ENCODE measurements at regions of chr6 and their contacts with region 1.

Region 1: DNA sequence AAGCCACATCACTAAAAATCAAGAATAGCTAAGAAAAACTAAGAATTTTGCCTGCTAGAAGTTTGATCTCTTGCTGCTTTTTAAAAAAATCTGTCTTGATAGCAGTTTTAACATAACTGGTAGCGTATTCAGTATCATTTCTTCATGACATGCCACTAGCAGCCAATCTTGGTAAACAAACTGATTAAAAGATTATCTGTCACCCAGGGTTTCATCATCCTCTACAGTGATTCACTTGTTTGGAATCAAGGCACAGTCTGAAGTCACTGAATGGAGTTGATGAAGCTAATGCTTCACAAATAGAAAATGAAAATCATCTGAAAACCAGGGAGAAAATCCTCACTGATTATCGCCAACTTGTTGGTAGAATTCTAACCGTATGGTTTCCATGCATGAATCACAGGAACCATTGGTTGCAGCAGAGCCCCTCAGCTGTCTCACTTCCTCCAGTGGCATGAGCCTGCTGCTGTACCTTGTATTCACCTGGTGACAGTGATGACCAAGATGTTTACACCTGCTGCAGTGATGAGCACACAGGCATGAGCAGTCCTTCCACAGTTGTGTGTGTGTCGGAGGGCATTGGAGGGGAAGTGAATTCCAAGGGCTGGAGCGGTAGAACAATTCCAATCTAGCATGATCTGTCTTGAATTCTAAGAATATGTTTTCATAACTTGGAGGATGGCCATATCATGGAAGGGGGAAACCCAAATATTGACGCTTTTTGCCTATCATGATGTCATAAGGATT is 275.0 kb downstream of the KHDC1L start:
- DNase-seq: peak; percentile 28
- H3K4me3 Mint-ChIP-seq: peak overlapping the region; percentile 26
- H3K27ac Mint-ChIP-seq: peak overlapping the region; percentile 94
- H3K4me1 Mint-ChIP-seq: peaks cover 63% of the 10 kb centered on the region
- H3K27me3 Mint-ChIP-seq: no peaks in the 10 kb centered on the region
- CTCF ChIP-seq: no peak

Region 2: DNA sequence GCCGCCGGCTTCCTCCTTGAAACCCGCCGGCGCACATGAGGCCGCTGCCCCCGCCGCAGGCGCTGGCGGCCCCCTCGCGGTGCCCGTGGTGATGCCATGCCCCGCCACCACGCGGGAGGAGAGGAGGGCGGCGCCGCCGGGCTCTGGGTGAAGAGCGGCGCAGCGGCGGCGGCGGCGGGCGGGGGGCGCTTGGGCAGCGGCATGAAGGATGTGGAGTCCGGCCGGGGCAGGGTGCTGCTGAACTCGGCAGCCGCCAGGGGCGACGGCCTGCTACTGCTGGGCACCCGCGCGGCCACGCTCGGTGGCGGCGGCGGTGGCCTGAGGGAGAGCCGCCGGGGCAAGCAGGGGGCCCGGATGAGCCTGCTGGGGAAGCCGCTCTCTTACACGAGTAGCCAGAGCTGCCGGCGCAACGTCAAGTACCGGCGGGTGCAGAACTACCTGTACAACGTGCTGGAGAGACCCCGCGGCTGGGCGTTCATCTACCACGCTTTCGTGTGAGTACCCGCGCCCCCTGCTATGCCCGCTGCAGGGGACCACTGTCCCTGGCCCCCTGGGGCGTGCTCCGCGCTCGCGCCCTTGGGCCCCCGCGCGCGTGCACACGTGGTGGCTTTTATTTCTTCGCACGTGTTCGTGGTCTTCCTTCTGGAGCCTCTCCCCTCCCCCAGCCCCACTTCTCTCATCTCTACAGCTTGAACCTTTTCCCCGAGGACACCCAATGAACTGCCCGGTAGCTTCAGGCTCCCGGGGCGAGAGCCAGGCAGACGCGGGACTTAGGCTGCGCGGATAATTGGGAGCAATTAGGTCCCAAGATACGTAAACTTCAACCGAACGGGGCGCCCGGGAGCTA is 328.0 kb before region 1 on chr6:
- CTCF ChIA-PET with region 1: no interaction called
- intact Hi-C with region 1: loop called (anchors 10 kb)
- DNase-seq: no peak
- H3K4me3 Mint-ChIP-seq: peak overlapping the region; percentile 78
- H3K27ac Mint-ChIP-seq: no peak overlapping the region
- H3K4me1 Mint-ChIP-seq: peaks cover 11% of the 10 kb centered on the region
- H3K27me3 Mint-ChIP-seq: no peaks in the 10 kb centered on the region
- CTCF ChIP-seq: no peak

Region 3: DNA sequence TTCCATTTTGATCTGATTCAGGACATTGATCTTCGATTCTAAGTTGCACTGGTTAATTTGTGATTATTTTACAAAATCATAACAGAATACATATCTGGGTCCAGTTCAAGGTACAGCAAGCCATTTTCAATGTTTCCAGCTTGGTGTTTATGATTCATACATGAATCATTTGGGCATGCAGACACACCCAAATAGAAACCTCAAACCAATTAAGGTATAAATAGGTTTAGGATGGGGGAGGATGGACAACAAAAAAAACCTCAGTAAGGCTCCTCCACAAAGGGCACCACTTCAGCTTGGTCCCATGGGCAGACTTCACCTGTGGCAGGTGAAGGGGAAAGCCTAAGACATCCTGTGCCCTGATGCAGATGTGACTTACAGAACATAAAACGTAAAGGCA is 82.3 kb after region 1 on chr6:
- CTCF ChIA-PET with region 1: no interaction called
- intact Hi-C with region 1: loop called (anchors 5 kb)
- DNase-seq: peak; percentile 28
- H3K4me3 Mint-ChIP-seq: no peak overlapping the region
- H3K27ac Mint-ChIP-seq: peak overlapping the region; percentile 56
- H3K4me1 Mint-ChIP-seq: peaks cover 40% of the 10 kb centered on the region
- H3K27me3 Mint-ChIP-seq: no peaks in the 10 kb centered on the region
- CTCF ChIP-seq: no peak

Region 4: DNA sequence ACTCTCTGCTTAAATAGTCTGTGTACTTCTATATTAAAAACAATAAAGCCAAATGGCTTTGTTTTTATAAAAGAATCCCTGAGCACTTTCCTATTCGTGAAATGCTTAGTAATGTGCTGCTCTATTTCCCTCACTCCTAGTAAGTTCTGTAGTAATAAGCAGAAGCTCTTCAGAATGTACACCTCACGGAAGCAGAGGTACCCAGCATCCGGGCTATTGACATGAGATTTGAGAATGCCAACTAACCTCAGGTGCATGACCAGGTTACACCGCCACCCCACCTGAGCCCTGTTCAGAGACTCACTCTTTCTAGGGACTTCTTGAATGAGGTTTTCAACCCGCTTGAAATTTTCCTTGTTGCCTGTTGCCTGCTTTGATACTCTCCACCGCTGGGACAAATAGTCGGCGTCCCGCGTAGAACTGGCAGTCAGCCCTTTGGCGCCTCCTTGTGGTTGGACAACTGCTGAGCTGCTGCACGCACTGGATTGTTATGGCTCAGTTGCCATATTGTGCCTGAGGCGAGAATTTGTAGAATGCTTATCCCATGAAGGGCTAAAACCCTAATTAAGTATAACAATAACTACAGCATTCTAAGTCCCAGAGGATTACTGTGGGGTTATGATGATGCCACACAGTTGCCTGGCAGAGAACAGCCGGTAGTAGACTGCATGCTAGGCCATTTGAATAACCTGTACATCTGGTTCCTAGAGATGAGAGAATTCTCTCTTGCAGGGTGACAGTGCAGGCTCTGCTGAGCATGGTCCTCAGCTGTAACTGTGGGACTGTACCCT is 179.6 kb after region 1 on chr6:
- CTCF ChIA-PET with region 1: no interaction called
- intact Hi-C with region 1: loop called (anchors 10 kb)
- DNase-seq: peak; percentile 89
- H3K4me3 Mint-ChIP-seq: peak overlapping the region; percentile 50
- H3K27ac Mint-ChIP-seq: no peak overlapping the region
- H3K4me1 Mint-ChIP-seq: no peaks in the 10 kb centered on the region
- H3K27me3 Mint-ChIP-seq: no peaks in the 10 kb centered on the region
- CTCF ChIP-seq: peak; percentile 97